Pancreas (tissue), 10 donors: ENCODE measurements at regions of chrX and their contacts with region 1.

Region 1: GRCh38 chrX:70970482-70970995 is 39.6 kb upstream of the SLC7A3 start:
- DNase-seq: no peak
- ATAC-seq: peak in 3 of 4 donors; percentile 26 to 32 (median 31)
- H3K4me3 ChIP-seq: no peak overlapping the region
- H3K27ac ChIP-seq: no peak overlapping the region
- H3K4me1 ChIP-seq: no peaks in the 10 kb centered on the region
- H3K27me3 ChIP-seq: peaks cover 0 to 12% (median 0%) of the 10 kb centered on the region in 4 donors
- CTCF ChIP-seq: peak in 1 of 4 donors; percentile 22

Region 2: DNA sequence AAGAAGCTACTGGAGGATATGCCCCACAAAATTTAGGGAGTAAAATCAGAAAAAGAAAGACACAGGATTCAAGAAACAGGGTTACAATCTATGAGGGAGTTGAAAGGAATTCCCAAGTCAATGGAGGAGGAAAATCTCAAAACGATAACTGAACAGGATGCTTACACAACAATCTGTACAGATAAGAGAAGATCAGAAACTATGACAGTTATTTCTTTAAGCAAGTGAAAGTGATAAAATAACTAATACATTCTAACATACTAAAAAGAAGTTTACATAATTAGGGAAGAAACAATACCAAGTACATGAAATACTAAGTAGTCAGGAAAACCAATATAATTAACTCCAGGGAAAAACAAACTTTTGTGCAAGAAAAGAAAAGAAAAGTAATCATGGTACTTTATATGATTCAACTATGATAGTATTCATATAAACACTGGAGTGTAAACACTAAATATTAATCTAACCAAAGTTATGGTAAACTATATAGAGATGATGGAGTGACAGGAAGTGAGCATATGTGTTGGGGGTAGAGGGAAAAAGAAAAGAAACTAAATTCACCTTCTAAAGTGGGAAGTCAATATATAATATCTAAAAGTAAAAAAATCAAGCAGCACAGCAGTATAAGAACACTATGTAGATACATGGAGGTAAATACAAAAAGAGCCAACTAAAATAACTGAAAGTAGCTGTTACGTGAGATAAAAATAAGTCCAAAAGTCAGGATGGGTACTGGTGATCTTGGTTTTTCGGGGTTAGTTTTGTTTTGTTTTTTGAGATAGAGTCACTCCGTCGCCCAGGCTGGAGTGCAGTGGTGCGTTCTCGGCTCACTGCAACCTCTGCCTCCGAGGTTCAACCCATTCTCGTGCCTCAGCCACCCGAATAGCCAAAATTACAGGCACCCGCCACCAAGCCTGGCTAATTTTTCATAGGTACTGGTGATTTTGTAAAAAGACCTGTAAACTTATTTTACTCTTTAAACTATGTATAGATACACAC is 161.3 kb before region 1 on chrX:
- intact Hi-C with region 1: no loop called
- DNase-seq: no peak
- ATAC-seq: no peak
- H3K4me3 ChIP-seq: no peak overlapping the region
- H3K27ac ChIP-seq: no peak overlapping the region
- H3K4me1 ChIP-seq: no peaks in the 10 kb centered on the region
- H3K27me3 ChIP-seq: peaks cover 0 to 11% (median 0%) of the 10 kb centered on the region in 4 donors
- CTCF ChIP-seq: no peak

Region 3: DNA sequence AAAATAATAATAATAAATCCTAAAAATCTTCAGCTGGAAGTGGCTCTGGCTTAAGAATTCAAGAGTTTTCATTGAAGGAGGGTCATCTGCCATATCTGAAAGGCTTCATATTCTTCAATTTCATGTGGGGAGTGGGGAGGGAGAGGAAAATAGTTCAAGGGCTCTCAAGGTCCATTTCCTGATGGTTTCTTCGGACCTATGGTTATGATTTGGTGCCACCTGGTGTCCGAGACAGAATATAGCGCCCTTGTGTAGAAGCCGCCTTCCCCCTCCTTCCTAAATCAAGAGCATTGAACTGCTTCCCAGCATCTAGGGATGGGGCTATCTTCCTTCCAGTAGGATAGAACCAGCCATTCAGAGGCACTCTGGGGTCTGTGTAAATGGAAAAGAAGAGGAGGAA is 208.4 kb after region 1 on chrX:
- intact Hi-C with region 1: loop called in 1 of 3 experiments (anchors 10 kb)
- DNase-seq: peak in 4 of 6 donors; percentile 33 to 66 (median 39)
- ATAC-seq: peak in 3 of 4 donors; percentile 54 to 61 (median 57)
- H3K4me3 ChIP-seq: no peak overlapping the region
- H3K27ac ChIP-seq: no peak overlapping the region
- H3K4me1 ChIP-seq: no peaks in the 10 kb centered on the region
- H3K27me3 ChIP-seq: no peaks in the 10 kb centered on the region
- CTCF ChIP-seq: peak; percentile 42 to 65 (median 52)

Region 4: DNA sequence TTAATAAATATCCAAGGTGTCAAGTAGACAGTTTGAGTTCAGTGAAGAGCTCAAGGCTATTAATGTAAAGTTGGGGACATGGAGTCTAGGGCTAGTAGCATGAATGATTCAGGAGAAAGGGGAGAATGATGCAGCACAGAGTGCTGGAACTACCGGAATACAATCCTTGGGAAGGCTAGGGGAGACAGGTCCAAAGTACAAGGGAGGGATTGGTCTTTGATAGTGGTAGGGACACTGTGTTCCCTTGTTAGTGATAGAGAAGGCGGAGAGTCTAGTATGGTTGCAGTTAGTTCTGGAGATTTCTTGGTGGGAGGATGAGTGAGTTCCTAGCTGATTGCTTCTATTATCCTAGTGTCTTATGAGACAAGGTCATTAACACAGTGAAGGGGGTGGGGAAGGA is 616.4 kb after region 1 on chrX:
- intact Hi-C with region 1: no loop called
- DNase-seq: no peak
- ATAC-seq: peak in 1 of 4 donors; percentile 60
- H3K4me3 ChIP-seq: no peak overlapping the region
- H3K27ac ChIP-seq: no peak overlapping the region
- H3K4me1 ChIP-seq: no peaks in the 10 kb centered on the region
- H3K27me3 ChIP-seq: no peaks in the 10 kb centered on the region
- CTCF ChIP-seq: no peak